ENCODE measurements at regions of chr2 and their contacts with region 1.

Region 1: DNA sequence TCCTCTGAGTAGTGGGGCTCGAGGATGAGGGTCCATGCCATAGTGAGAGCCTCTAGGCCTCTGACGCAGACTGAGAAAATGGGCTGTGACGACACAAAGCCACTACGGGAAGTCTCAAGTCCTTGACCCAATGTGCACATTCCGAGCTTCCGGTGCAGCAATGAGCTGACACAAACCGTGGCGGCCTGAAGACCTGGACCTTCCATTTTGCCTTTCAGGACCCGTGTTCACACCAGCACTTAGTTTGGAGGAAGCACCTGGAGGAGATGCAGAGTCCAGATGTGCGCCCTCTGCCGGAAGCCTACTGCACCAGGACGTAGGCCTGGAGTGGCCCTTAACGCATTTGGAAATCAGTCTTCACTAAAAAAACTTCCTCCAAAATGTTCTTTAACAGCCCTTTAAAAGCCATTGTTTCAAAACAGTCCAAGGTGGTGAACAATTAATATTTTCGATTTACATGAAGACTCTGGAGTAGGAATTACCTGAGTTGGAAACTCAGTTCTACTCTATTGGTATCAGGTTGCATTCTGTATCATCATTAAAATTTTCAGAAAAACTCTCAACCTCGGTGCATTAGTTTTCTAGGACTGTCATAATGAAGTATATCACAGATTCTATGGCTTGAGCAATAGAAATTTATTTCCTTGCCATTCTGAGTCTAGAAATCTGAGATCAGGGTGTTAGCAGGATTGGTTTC is 33.9 kb downstream of the BMP10 start:
- DNase-seq: peak; percentile 78
- ATAC-seq: peak; percentile 46
- H3K4me3 ChIP-seq: peak overlapping the region in 1 of 5 experiments; percentile 8
- H3K4me3 Mint-ChIP-seq: peak overlapping the region; percentile 26
- H3K27ac ChIP-seq: no peak overlapping the region
- H3K27ac Mint-ChIP-seq: peak overlapping the region; percentile 75
- H3K4me1 ChIP-seq: peaks cover 42 to 47% of the 10 kb centered on the region in 2 donors
- H3K4me1 Mint-ChIP-seq: peaks cover 54% of the 10 kb centered on the region
- H3K27me3 ChIP-seq: no peaks in the 10 kb centered on the region
- H3K27me3 Mint-ChIP-seq: no peaks in the 10 kb centered on the region
- CTCF ChIP-seq: peak; percentile 82

Region 2: GRCh38 chr2:68176657-68177056 is 660.7 kb before region 1 on chr2:
- CTCF ChIA-PET with region 1: no interaction called
- POLR2A ChIA-PET with region 1: no interaction called
- intact Hi-C with region 1: no loop called
- DNase-seq: no peak
- ATAC-seq: no peak
- H3K4me3 ChIP-seq: no peak overlapping the region
- H3K4me3 Mint-ChIP-seq: no peak overlapping the region
- H3K27ac ChIP-seq: peak overlapping the region in 1 of 2 donors; percentile 16
- H3K27ac Mint-ChIP-seq: peak overlapping the region; percentile 26
- H3K4me1 ChIP-seq: peaks cover 27% of the 10 kb centered on the region in 2 donors
- H3K4me1 Mint-ChIP-seq: peaks cover 29% of the 10 kb centered on the region
- H3K27me3 ChIP-seq: no peaks in the 10 kb centered on the region
- H3K27me3 Mint-ChIP-seq: no peaks in the 10 kb centered on the region
- CTCF ChIP-seq: no peak

Region 3: GRCh38 chr2:68379184-68379708 is 458.1 kb before region 1 on chr2:
- CTCF ChIA-PET with region 1: no interaction called
- POLR2A ChIA-PET with region 1: no interaction called
- intact Hi-C with region 1: no loop called
- DNase-seq: no peak
- ATAC-seq: no peak
- H3K4me3 ChIP-seq: no peak overlapping the region
- H3K4me3 Mint-ChIP-seq: peak overlapping the region; percentile 23
- H3K27ac ChIP-seq: peak overlapping the region in 1 of 2 donors; percentile 32
- H3K27ac Mint-ChIP-seq: peak overlapping the region; percentile 79
- H3K4me1 ChIP-seq: peaks cover 69 to 73% of the 10 kb centered on the region in 2 donors
- H3K4me1 Mint-ChIP-seq: peaks cover 83% of the 10 kb centered on the region
- H3K27me3 ChIP-seq: no peaks in the 10 kb centered on the region
- H3K27me3 Mint-ChIP-seq: no peaks in the 10 kb centered on the region
- CTCF ChIP-seq: no peak

Region 4: GRCh38 chr2:68734688-68735525 is 102.4 kb before region 1 on chr2 and contains the start of gene ARHGAP25:
- CTCF ChIA-PET with region 1: interaction called, 10 read pairs
- POLR2A ChIA-PET with region 1: no interaction called
- intact Hi-C with region 1: no loop called
- DNase-seq: peak; percentile 83
- ATAC-seq: peak; percentile 78
- H3K4me3 ChIP-seq: peak within 1 kb of the TSS; percentile 47 to 92 (median 64)
- H3K4me3 Mint-ChIP-seq: no peak within 1 kb of the TSS
- H3K27ac ChIP-seq: peak within 1 kb of the TSS; percentile 93
- H3K27ac Mint-ChIP-seq: no peak within 1 kb of the TSS
- H3K4me1 ChIP-seq: peaks cover 66 to 77% of the 10 kb centered on the region in 2 donors
- H3K4me1 Mint-ChIP-seq: peaks cover 55% of the 10 kb centered on the region
- H3K27me3 ChIP-seq: no peaks in the 10 kb centered on the region
- H3K27me3 Mint-ChIP-seq: no peaks in the 10 kb centered on the region
- CTCF ChIP-seq: no peak
- total RNA-seq, gene ARHGAP25: 207 and 221 TPM in 2 replicates

Region 5: DNA sequence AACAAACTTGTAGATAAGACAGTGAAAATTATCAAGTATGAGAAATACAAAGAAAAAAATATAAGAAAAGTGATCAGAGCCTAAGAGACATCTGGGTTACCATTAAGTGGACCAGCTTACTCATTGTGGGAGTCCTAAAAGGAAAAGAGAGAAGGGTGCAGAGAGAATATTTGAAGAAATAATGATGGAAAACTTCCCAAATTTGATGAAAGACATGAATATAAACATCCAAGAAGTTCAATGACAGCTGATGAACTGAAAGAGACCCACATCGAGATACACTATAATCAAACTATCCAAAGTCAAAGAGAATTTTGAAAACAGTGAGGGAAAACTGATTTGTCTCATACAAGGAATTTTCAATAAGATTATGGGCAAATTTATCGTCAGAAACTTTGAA is 80.2 kb before region 1 on chr2:
- CTCF ChIA-PET with region 1: interaction called, 140 read pairs
- POLR2A ChIA-PET with region 1: interaction called, 3 read pairs
- intact Hi-C with region 1: no loop called
- DNase-seq: no peak
- ATAC-seq: no peak
- H3K4me3 ChIP-seq: no peak overlapping the region
- H3K4me3 Mint-ChIP-seq: no peak overlapping the region
- H3K27ac ChIP-seq: no peak overlapping the region
- H3K27ac Mint-ChIP-seq: no peak overlapping the region
- H3K4me1 ChIP-seq: peaks cover 33 to 45% of the 10 kb centered on the region in 2 donors
- H3K4me1 Mint-ChIP-seq: peaks cover 66% of the 10 kb centered on the region
- H3K27me3 ChIP-seq: no peaks in the 10 kb centered on the region
- H3K27me3 Mint-ChIP-seq: no peaks in the 10 kb centered on the region
- CTCF ChIP-seq: no peak

Region 6: DNA sequence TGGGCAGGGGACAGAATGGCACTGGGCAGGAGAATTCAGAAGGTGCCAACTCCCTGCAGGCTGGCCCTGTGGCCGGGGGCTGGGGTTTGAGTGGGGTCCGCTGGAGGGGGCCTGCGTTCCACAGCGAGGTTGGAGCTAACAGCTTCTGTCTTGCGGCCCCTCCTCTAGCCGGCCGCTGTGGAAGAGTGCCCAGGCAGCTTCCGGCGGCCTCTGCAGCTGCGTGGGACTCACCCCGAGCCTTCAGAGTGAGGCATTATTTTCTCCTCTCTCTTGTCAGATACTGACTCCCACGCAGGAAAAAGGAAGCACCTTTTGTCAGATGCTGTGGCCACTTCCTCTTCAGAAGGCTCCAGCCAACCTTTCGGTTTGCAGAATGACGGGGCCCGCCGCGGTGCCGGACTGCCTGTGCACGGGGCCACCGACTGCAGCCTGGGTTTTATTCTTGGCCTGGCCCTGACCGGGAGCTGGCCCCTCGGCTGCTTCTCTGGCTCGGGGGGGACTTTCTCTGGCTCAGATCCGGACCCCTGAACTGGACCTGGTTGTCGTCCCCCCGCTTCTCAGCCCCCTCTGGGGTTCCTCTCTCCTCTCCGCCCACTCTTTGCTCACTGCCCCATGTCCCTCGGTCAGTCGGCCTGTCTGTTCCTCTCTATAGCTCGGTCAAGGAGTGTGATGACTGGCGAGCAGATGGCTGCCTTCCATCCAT is 62.6 kb before region 1 on chr2:
- CTCF ChIA-PET with region 1: interaction called, 24 read pairs
- POLR2A ChIA-PET with region 1: interaction called, 3 read pairs
- intact Hi-C with region 1: loop called (anchors 2 kb)
- DNase-seq: peak; percentile 91
- ATAC-seq: peak; percentile 80
- H3K4me3 ChIP-seq: peak overlapping the region; percentile 79 to 96 (median 91)
- H3K4me3 Mint-ChIP-seq: peak overlapping the region; percentile 99
- H3K27ac ChIP-seq: peak overlapping the region; percentile 93 to 99
- H3K27ac Mint-ChIP-seq: peak overlapping the region; percentile 98
- H3K4me1 ChIP-seq: peaks cover 83 to 88% of the 10 kb centered on the region in 2 donors
- H3K4me1 Mint-ChIP-seq: peaks cover 80% of the 10 kb centered on the region
- H3K27me3 ChIP-seq: no peaks in the 10 kb centered on the region
- H3K27me3 Mint-ChIP-seq: no peaks in the 10 kb centered on the region
- CTCF ChIP-seq: no peak

Region 7: GRCh38 chr2:68796294-68796905 is 40.9 kb before region 1 on chr2:
- CTCF ChIA-PET with region 1: interaction called, 14 read pairs
- POLR2A ChIA-PET with region 1: interaction called, 6 read pairs
- intact Hi-C with region 1: no loop called
- DNase-seq: peak; percentile 71
- ATAC-seq: peak; percentile 59
- H3K4me3 ChIP-seq: peak overlapping the region in 3 of 5 experiments; percentile 0 to 45 (median 1)
- H3K4me3 Mint-ChIP-seq: peak overlapping the region; percentile 79
- H3K27ac ChIP-seq: peak overlapping the region; percentile 67 to 96
- H3K27ac Mint-ChIP-seq: peak overlapping the region; percentile 94
- H3K4me1 ChIP-seq: peaks cover 63 to 68% of the 10 kb centered on the region in 2 donors
- H3K4me1 Mint-ChIP-seq: peaks cover 91% of the 10 kb centered on the region
- H3K27me3 ChIP-seq: no peaks in the 10 kb centered on the region
- H3K27me3 Mint-ChIP-seq: no peaks in the 10 kb centered on the region
- CTCF ChIP-seq: no peak

Region 8: GRCh38 chr2:68807821-68808266 is 29.5 kb before region 1 on chr2:
- CTCF ChIA-PET with region 1: interaction called, 12 read pairs
- POLR2A ChIA-PET with region 1: interaction called, 4 read pairs
- intact Hi-C with region 1: no loop called
- DNase-seq: no peak
- ATAC-seq: no peak
- H3K4me3 ChIP-seq: no peak overlapping the region
- H3K4me3 Mint-ChIP-seq: no peak overlapping the region
- H3K27ac ChIP-seq: peak overlapping the region; percentile 23 to 84
- H3K27ac Mint-ChIP-seq: peak overlapping the region; percentile 89
- H3K4me1 ChIP-seq: peaks cover 28 to 29% of the 10 kb centered on the region in 2 donors
- H3K4me1 Mint-ChIP-seq: peaks cover 61% of the 10 kb centered on the region
- H3K27me3 ChIP-seq: no peaks in the 10 kb centered on the region
- H3K27me3 Mint-ChIP-seq: no peaks in the 10 kb centered on the region
- CTCF ChIP-seq: no peak

Region 9: DNA sequence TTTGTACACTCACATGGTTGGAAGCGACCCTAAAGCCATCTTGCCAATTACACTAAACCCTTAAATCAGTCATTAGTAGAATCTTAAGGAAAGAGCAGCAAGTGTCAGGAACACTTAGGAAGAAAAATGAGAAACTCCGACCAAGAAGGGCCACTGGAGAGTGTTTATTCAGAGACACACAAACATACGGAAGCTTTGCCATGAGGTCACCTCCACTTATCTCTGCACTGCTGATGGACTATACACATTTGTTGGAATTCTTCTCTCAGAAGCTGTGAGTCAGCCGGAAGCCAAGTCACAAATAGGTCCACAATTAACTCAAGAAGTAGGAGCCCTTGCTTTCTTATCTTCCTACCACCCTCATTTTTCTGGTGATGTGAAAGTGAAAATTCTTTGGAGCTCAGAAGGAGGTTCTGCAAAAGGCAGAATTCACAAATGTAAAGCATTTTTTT is 12.3 kb after region 1 on chr2:
- CTCF ChIA-PET with region 1: interaction called, 11 read pairs
- POLR2A ChIA-PET with region 1: no interaction called
- intact Hi-C with region 1: no loop called
- DNase-seq: no peak
- ATAC-seq: no peak
- H3K4me3 ChIP-seq: no peak overlapping the region
- H3K4me3 Mint-ChIP-seq: no peak overlapping the region
- H3K27ac ChIP-seq: no peak overlapping the region
- H3K27ac Mint-ChIP-seq: no peak overlapping the region
- H3K4me1 ChIP-seq: no peaks in the 10 kb centered on the region
- H3K4me1 Mint-ChIP-seq: no peaks in the 10 kb centered on the region
- H3K27me3 ChIP-seq: peaks cover 0 to 7% (median 0%) of the 10 kb centered on the region in 4 experiments
- H3K27me3 Mint-ChIP-seq: peaks cover 18% of the 10 kb centered on the region
- CTCF ChIP-seq: no peak

Region 10: DNA sequence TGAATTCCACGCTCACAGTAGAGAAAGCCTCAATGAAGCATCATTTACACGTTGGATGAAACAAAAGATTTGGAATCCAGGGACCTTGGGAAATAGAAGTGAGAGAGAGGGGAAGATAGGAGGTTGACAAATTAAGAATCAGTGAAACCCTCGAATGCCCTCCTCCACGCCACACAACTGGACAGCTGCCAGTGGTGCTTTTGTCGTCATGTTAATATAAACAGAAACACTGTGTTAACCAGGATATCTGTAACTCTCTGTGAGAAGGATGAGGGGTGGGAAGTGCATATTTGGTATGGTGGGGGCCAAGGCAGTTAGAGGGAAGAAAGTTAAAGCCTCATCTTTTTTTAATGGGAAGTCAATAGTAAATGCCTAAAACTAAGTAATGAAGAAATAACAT is 441.1 kb after region 1 on chr2:
- CTCF ChIA-PET with region 1: no interaction called
- POLR2A ChIA-PET with region 1: no interaction called
- intact Hi-C with region 1: no loop called
- DNase-seq: no peak
- ATAC-seq: no peak
- H3K4me3 ChIP-seq: no peak overlapping the region
- H3K4me3 Mint-ChIP-seq: no peak overlapping the region
- H3K27ac ChIP-seq: no peak overlapping the region
- H3K27ac Mint-ChIP-seq: no peak overlapping the region
- H3K4me1 ChIP-seq: no peaks in the 10 kb centered on the region
- H3K4me1 Mint-ChIP-seq: no peaks in the 10 kb centered on the region
- H3K27me3 ChIP-seq: peaks cover 0 to 7% (median 5%) of the 10 kb centered on the region in 4 experiments
- H3K27me3 Mint-ChIP-seq: peaks cover 17% of the 10 kb centered on the region
- CTCF ChIP-seq: no peak

Region 11: DNA sequence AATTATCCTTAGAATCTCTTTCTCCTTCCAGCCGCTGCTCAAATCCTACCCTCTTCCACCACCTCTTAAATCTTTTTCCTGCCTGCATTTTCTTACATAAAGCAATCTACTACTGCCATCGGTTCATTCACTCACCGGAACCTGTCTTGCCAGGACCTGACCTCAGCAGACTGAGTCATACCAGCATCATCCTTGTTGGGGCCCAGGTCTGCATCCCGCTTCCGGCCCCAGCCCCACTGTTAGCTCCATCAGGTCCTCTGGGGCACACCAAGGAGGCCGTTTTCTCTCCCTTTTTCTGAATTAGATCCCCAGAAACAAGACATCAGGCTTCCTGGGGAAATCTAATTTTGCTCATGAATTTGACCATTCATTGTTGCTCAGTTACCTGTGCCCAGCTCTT is 1759.0 kb after region 1 on chr2:
- CTCF ChIA-PET with region 1: no interaction called
- POLR2A ChIA-PET with region 1: no interaction called
- intact Hi-C with region 1: no loop called
- DNase-seq: no peak
- ATAC-seq: no peak
- H3K4me3 ChIP-seq: no peak overlapping the region
- H3K4me3 Mint-ChIP-seq: no peak overlapping the region
- H3K27ac ChIP-seq: no peak overlapping the region
- H3K27ac Mint-ChIP-seq: no peak overlapping the region
- H3K4me1 ChIP-seq: no peaks in the 10 kb centered on the region
- H3K4me1 Mint-ChIP-seq: no peaks in the 10 kb centered on the region
- H3K27me3 ChIP-seq: peaks cover 0 to 3% (median 0%) of the 10 kb centered on the region in 4 experiments
- H3K27me3 Mint-ChIP-seq: peaks cover 23% of the 10 kb centered on the region
- CTCF ChIP-seq: no peak

Measured in B cell (primary cell).